WTC11 (cell line): ENCODE measurements at regions of chr11 and their contacts with region 1.

Region 1: GRCh38 chr11:123246749-123247495 is 51.9 kb upstream of the CLMP start:
- DNase-seq: peak; percentile 90
- ATAC-seq: peak; percentile 87
- H3K4me3 Mint-ChIP-seq: no peak overlapping the region
- H3K27ac Mint-ChIP-seq: no peak overlapping the region
- H3K4me1 Mint-ChIP-seq: peaks cover 22% of the 10 kb centered on the region
- H3K27me3 Mint-ChIP-seq: peaks cover 3% of the 10 kb centered on the region; the same call in 1 of the 2 replicates
- CTCF ChIP-seq: peak; percentile 93

Region 2: GRCh38 chr11:123054301-123055065 is 192.4 kb before region 1 on chr11:
- CTCF ChIA-PET with region 1: interaction called, 19 read pairs
- POLR2A ChIA-PET with region 1: interaction called, 5 read pairs
- DNase-seq: no peak
- ATAC-seq: peak; percentile 62
- H3K4me3 Mint-ChIP-seq: no peak overlapping the region
- H3K27ac Mint-ChIP-seq: peak overlapping the region; percentile 82
- H3K4me1 Mint-ChIP-seq: peaks cover 21% of the 10 kb centered on the region
- H3K27me3 Mint-ChIP-seq: no peaks in the 10 kb centered on the region
- CTCF ChIP-seq: peak; percentile 52; the same call in 1 of the 2 replicates

Region 3: GRCh38 chr11:123137431-123138224 is 109.3 kb before region 1 on chr11:
- CTCF ChIA-PET with region 1: interaction called, 21 read pairs
- POLR2A ChIA-PET with region 1: no interaction called
- DNase-seq: peak; percentile 78
- ATAC-seq: peak; percentile 93
- H3K4me3 Mint-ChIP-seq: peak overlapping the region; percentile 55
- H3K27ac Mint-ChIP-seq: peak overlapping the region; percentile 98
- H3K4me1 Mint-ChIP-seq: peaks cover 24% of the 10 kb centered on the region
- H3K27me3 Mint-ChIP-seq: no peaks in the 10 kb centered on the region
- CTCF ChIP-seq: no peak

Region 4: DNA sequence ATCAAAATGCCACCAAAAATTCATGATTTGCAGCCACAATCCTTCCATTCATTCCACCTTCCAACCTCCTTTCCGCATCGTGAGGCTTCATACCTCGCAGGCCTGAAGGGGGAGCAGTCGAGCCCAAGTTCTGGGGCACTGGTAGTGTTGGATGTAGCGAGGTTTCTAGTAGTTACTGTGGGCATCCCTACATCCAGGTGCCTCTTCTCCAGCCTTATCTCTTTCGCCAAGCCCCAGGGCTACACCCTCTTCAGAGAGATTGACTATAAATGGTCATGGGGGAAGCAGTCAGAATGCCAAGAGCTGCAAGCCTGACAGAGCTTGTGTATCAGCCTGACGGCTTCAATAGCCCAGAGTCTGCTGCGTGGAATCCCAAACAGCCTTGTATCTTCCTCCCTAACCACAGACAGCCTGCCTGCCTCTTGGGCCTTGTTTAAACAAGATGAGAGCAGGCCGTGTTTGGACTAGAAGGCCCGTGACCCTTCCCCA is 80.8 kb before region 1 on chr11:
- CTCF ChIA-PET with region 1: interaction called, 93 read pairs
- POLR2A ChIA-PET with region 1: no interaction called
- DNase-seq: peak; percentile 80
- ATAC-seq: peak; percentile 93
- H3K4me3 Mint-ChIP-seq: no peak overlapping the region
- H3K27ac Mint-ChIP-seq: no peak overlapping the region
- H3K4me1 Mint-ChIP-seq: peaks cover 46% of the 10 kb centered on the region
- H3K27me3 Mint-ChIP-seq: no peaks in the 10 kb centered on the region; the same call in 1 of the 2 replicates
- CTCF ChIP-seq: peak; percentile 59

Region 5: DNA sequence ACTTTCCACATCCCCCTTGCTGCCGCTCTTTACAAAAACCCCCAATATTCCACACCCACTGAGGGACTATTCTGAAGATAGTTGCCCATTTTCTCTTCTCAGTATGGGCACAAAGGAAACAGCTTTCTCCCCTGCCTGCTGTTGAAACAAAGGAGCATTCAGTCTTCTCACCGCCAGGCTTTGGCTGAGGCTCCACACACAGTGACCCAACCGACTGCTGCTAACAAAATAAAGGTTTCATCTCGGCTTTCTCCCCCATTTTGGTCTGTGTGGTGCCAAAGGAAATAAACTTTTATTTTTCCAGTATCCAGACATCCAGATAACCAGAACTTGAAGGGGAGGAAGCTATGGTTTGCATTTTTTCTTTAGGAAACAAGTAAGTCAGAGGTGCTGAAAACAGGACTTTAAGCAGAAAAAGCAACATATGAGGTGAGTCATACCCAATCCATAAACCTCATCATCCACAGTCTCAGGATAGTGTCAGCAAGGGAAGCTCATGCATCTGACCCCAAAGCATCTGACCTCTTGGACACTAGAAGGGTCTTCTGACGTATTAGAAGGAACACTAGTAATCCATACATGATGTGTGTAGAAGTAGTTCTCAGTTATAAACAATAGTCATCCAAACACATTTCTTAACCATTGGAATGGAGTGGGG is 58.3 kb before region 1 on chr11:
- CTCF ChIA-PET with region 1: interaction called, 19 read pairs
- POLR2A ChIA-PET with region 1: no interaction called
- DNase-seq: no peak
- ATAC-seq: peak; percentile 63
- H3K4me3 Mint-ChIP-seq: 0 out of 2 replicates have a peak overlapping the region, but pooled peaks have one; percentile 31
- H3K27ac Mint-ChIP-seq: peak overlapping the region; percentile 38; the same call in 1 of the 2 replicates
- H3K4me1 Mint-ChIP-seq: peaks cover 67% of the 10 kb centered on the region
- H3K27me3 Mint-ChIP-seq: no peaks in the 10 kb centered on the region
- CTCF ChIP-seq: no peak

Region 6: GRCh38 chr11:123386796-123387510 is 140.0 kb after region 1 on chr11:
- CTCF ChIA-PET with region 1: no interaction called
- POLR2A ChIA-PET with region 1: no interaction called
- DNase-seq: no peak
- ATAC-seq: no peak
- H3K4me3 Mint-ChIP-seq: no peak overlapping the region
- H3K27ac Mint-ChIP-seq: no peak overlapping the region
- H3K4me1 Mint-ChIP-seq: no peaks in the 10 kb centered on the region
- H3K27me3 Mint-ChIP-seq: peaks cover 4% of the 10 kb centered on the region
- CTCF ChIP-seq: no peak

Region 7: GRCh38 chr11:123783536-123783935 is 536.6 kb after region 1 on chr11:
- CTCF ChIA-PET with region 1: no interaction called
- POLR2A ChIA-PET with region 1: no interaction called
- DNase-seq: no peak
- ATAC-seq: no peak
- H3K4me3 Mint-ChIP-seq: no peak overlapping the region
- H3K27ac Mint-ChIP-seq: no peak overlapping the region
- H3K4me1 Mint-ChIP-seq: peaks cover 38% of the 10 kb centered on the region
- H3K27me3 Mint-ChIP-seq: no peaks in the 10 kb centered on the region; the same call in 1 of the 2 replicates
- CTCF ChIP-seq: no peak